Activated B cell treated with CpG ODN at 0.5 μM for 24 hours (primary cell): ENCODE measurements at regions of chr7 and their contacts with region 1.

Region 1: DNA sequence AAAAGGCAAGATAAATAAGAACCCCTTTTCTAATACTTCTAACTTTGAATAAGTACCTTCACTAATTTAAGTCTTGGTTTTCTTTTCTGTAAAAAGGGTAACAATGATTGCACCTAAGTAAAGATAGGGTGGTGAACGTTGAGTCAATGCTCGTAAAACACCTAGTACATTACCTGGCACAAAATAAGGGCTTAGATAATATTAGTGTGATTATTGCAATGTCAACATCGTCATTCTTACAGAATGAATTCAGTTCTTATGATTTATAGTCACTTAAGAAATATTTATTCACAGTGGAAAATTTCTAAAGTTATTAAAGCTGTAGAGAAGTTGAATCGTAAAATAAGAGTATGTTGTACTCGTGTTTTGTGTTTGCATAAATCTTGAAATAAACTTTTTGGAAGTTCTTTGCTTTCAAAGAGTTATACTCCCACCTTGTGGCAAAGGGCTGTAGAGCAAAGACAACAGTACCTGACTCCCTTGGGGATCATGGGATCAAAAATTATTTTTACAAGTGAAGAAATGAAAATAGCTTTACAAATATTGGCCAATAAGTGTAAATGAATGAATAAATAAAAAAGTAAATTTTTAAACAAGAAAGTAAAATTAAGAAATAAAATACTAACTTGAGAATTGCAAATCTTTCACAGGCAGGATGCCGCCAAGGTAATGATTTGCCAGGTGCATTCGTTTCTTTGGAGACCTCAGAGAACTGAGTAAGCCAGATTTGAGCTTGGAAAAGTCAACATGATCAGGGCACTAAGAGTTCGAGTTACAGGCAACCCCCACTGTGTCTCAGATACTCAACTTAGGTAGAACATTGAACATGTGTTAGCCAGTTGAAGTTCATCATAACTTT is 285.8 kb upstream of the CACNA2D1 start:
- DNase-seq: no peak
- ATAC-seq: no peak
- H3K4me3 Mint-ChIP-seq: no peak overlapping the region
- H3K27ac Mint-ChIP-seq: no peak overlapping the region
- H3K4me1 Mint-ChIP-seq: no peaks in the 10 kb centered on the region
- H3K27me3 Mint-ChIP-seq: no peaks in the 10 kb centered on the region
- CTCF ChIP-seq: no peak

Region 2: GRCh38 chr7:81482600-81483186 is 1246.7 kb before region 1 on chr7:
- CTCF ChIA-PET with region 1: no interaction called
- POLR2A ChIA-PET with region 1: no interaction called
- intact Hi-C with region 1: loop called (anchors 5 kb)
- DNase-seq: no peak
- ATAC-seq: no peak
- H3K4me3 Mint-ChIP-seq: no peak overlapping the region
- H3K27ac Mint-ChIP-seq: no peak overlapping the region
- H3K4me1 Mint-ChIP-seq: no peaks in the 10 kb centered on the region
- H3K27me3 Mint-ChIP-seq: no peaks in the 10 kb centered on the region
- CTCF ChIP-seq: no peak

Region 3: DNA sequence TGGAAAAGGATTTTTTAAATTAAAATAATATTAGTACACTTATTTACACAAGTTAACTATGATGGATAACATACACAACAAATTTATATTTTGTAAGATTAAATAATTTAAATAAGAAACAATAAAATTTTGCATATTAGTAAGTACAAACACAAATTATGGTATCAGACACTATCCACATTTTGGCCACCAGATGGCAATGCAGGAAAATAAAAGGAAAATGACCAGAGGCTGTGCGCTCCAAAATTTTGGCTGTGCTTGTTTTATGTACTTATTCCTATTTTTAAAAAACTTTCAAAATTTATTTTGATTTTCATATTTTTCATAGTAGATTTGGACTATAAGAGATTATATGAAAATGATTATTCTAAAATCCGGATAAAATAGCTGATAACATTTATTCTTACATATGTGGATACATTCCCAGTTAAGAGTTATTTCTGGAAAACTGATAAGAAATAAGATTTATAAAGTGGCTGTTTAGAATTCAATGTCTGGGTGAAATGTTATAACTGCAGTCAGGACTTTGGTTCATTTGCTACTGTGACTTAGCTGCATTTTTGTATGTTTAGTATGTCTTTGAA is 684.8 kb before region 1 on chr7:
- CTCF ChIA-PET with region 1: no interaction called
- POLR2A ChIA-PET with region 1: no interaction called
- intact Hi-C with region 1: loop called (anchors 2 kb)
- DNase-seq: no peak
- ATAC-seq: no peak
- H3K4me3 Mint-ChIP-seq: no peak overlapping the region
- H3K27ac Mint-ChIP-seq: no peak overlapping the region
- H3K4me1 Mint-ChIP-seq: no peaks in the 10 kb centered on the region
- H3K27me3 Mint-ChIP-seq: no peaks in the 10 kb centered on the region
- CTCF ChIP-seq: no peak

Region 4: DNA sequence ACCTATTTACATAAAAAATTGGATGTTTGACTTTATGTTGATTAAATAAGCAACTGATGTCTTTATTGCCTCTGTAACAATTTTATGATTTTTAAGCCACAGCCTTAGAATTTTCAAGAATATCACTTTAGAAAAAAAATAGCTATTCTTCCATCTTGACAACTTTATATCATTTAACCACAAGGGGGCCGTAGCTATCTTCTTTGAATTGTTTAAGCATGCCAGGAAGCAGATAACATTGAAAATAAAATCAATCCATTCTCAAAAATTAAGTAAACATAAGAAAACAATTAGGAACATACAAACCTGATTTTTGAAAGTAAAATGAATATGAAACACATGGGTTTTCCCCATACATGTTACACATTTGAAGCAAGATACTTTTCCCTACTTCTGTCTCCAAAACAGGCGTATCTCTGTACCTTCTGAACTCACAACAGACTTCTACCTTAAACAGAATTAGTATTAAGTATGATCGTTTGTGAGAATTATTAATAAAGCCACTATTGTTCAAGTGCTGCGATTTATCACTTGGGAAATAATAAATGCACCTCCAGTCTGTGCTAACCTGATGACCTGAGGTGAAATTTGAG is 494.8 kb before region 1 on chr7:
- CTCF ChIA-PET with region 1: no interaction called
- POLR2A ChIA-PET with region 1: no interaction called
- intact Hi-C with region 1: loop called (anchors 5 kb)
- DNase-seq: no peak
- ATAC-seq: no peak
- H3K4me3 Mint-ChIP-seq: no peak overlapping the region
- H3K27ac Mint-ChIP-seq: no peak overlapping the region
- H3K4me1 Mint-ChIP-seq: no peaks in the 10 kb centered on the region
- H3K27me3 Mint-ChIP-seq: no peaks in the 10 kb centered on the region
- CTCF ChIP-seq: no peak

Region 5: DNA sequence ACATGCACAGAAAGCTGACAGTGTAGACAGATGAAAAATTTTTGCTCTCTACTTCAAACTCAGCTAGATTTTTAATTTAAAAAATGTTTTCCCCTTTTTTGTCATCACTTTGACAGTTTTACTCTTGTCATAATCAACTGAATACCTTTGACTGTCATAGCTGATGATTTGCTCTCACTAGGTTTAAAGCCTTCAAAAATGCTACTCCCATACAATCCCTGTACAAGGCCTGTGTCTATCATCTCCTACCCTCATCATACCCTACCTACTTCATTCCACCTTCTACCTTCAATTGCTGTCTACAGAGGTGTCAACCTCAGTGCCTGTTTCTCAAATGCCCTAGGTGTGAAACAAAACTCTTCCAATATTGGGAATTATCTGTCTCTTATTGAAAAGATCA is 1234.9 kb after region 1 on chr7:
- CTCF ChIA-PET with region 1: no interaction called
- POLR2A ChIA-PET with region 1: no interaction called
- intact Hi-C with region 1: no loop called
- DNase-seq: no peak
- ATAC-seq: no peak
- H3K4me3 Mint-ChIP-seq: no peak overlapping the region
- H3K27ac Mint-ChIP-seq: no peak overlapping the region
- H3K4me1 Mint-ChIP-seq: no peaks in the 10 kb centered on the region
- H3K27me3 Mint-ChIP-seq: no peaks in the 10 kb centered on the region
- CTCF ChIP-seq: no peak